ENCODE measurements at regions of chr3 and their contacts with region 1.

Region 1: DNA sequence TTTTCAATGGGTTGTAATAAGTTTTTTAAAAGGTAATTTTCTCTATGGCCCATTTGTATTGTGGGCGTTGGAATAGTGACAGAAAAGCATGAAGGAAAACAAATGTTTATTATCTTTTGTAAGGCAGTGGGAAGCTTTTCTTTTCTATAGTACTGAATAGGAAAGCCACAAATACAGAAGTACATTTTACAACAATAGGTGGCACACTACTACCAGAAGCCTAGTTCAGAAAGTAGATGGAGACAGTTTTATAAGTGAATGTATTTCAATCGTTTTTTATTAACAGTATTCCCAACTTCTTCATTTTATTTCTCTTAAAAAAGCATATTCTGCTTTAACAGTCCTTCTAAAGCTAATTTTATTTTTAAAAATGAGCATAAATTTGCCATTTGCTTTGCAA is 296.7 kb downstream of the PTPRG start:
- DNase-seq: peak; percentile 9
- CTCF ChIP-seq: peak; percentile 55

Region 2: DNA sequence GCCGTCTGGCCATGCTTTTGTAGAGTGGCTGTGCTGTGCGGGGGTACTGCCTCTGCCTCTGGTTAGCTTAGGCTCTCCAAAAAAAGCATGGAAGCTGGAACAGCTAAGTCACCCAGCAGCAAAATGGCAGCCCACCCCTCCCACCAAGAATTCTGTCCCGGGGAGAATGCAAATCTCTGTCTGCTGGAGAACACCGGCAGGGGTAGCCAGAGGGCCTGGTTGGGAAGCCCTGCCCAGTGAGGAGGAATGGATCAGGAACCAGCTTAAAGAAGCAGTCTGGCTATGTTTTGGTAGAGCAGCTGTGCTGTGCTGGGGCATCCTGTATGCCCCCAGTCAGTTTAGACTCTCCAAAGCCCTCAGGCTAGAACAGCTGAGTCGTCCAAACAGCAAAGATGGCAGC is 352.9 kb before region 1 on chr3:
- in situ Hi-C with region 1: no loop called
- DNase-seq: no peak
- CTCF ChIP-seq: no peak

Region 3: GRCh38 chr3:61936344-61936937 is 78.4 kb after region 1 on chr3:
- in situ Hi-C with region 1: loop called (anchors 10 kb)
- DNase-seq: peak; percentile 21
- CTCF ChIP-seq: peak; percentile 74

Region 4: GRCh38 chr3:62188681-62189383 is 330.8 kb after region 1 on chr3:
- in situ Hi-C with region 1: loop called (anchors 25 kb)
- DNase-seq: peak; percentile 82
- CTCF ChIP-seq: peak; percentile 83

Measured in GM13977 (cell line).